MCF 10A (cell line): ENCODE measurements at regions of chr6 and their contacts with region 1.

Region 1: GRCh38 chr6:106751501-106752252 is 122.3 kb downstream of the QRSL1 start:
- DNase-seq: peak; percentile 96
- H3K4me3 Mint-ChIP-seq: no peak overlapping the region
- H3K27ac Mint-ChIP-seq: peak overlapping the region; percentile 42
- H3K4me1 Mint-ChIP-seq: peaks cover 57% of the 10 kb centered on the region
- H3K27me3 Mint-ChIP-seq: no peaks in the 10 kb centered on the region
- CTCF ChIP-seq: no peak

Region 2: DNA sequence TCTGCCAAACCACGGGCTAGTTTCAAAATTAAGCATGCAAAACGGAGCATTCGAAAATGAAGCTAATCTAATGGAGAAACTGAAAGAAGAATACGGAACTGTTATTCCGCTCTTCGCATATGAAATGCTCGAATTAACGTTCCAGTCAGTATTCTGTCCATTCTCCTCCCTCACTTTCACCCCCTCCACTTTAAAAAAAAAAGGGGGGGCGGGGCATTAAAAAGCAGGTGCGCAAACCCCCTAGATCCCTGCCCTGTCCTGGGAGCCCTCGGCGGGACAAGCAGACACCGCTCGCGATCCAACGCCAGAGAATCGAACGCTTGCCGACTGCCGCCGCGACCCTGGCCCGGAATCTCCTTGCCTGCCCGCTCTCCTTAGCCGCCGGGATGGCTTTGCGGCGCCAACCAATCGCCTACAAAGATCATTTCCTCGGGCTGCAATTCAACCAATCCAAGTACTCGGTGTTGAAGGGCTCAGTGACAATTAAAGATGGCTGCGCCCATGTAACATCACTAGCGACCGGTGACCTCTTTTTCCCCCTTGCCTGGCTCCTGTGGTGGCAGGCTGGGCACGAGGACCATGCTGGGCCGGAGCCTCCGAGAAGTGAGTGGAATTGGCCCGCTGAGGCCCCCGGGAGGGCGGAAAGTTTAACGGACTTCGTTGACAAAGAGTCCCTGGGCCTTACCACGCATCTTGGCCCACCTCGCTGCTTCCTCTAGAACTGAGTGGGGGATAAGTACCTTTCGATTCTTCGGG is 122.4 kb before region 1 on chr6 and contains the starts of genes QRSL1 and RTN4IP1:
- CTCF ChIA-PET with region 1: interaction called, 3 read pairs
- POLR2A ChIA-PET with region 1: no interaction called
- intact Hi-C with region 1: loop called (anchors 1 kb)
- DNase-seq: peak; percentile 94
- H3K4me3 Mint-ChIP-seq: peak within 1 kb of the TSS; percentile 97
- H3K27ac Mint-ChIP-seq: peak within 1 kb of the TSS; percentile 97
- H3K4me1 Mint-ChIP-seq: peaks cover 20% of the 10 kb centered on the region
- H3K27me3 Mint-ChIP-seq: no peaks in the 10 kb centered on the region
- CTCF ChIP-seq: no peak
- total RNA-seq, gene QRSL1: 14.0 and 16.4 TPM in 2 replicates
- total RNA-seq, gene RTN4IP1: 6.2 and 6.5 TPM in 2 replicates

Region 3: GRCh38 chr6:106739387-106739786 is 12.3 kb before region 1 on chr6:
- CTCF ChIA-PET with region 1: interaction called, 16 read pairs
- POLR2A ChIA-PET with region 1: interaction called, 35 read pairs
- intact Hi-C with region 1: no loop called
- DNase-seq: peak; percentile 99
- H3K4me3 Mint-ChIP-seq: no peak overlapping the region
- H3K27ac Mint-ChIP-seq: peak overlapping the region; percentile 70
- H3K4me1 Mint-ChIP-seq: peaks cover 47% of the 10 kb centered on the region
- H3K27me3 Mint-ChIP-seq: no peaks in the 10 kb centered on the region
- CTCF ChIP-seq: no peak

Region 4: GRCh38 chr6:106799008-106799894 is 47.6 kb after region 1 on chr6:
- CTCF ChIA-PET with region 1: interaction called, 3 read pairs
- POLR2A ChIA-PET with region 1: interaction called, 19 read pairs
- intact Hi-C with region 1: no loop called
- DNase-seq: peak; percentile 83
- H3K4me3 Mint-ChIP-seq: peak overlapping the region; percentile 33
- H3K27ac Mint-ChIP-seq: peak overlapping the region; percentile 80
- H3K4me1 Mint-ChIP-seq: peaks cover 22% of the 10 kb centered on the region
- H3K27me3 Mint-ChIP-seq: no peaks in the 10 kb centered on the region
- CTCF ChIP-seq: no peak